ENCODE measurements at regions of chr6 and their contacts with region 1.

Region 1: GRCh38 chr6:1381481-1382330 is 7.7 kb upstream of the FOXF2 start:
- DNase-seq: peak in 1 of 2 experiments; percentile 88
- H3K4me3 ChIP-seq: peak overlapping the region; percentile 32
- H3K4me3 Mint-ChIP-seq: peak overlapping the region; percentile 21
- H3K27ac Mint-ChIP-seq: no peak overlapping the region
- H3K4me1 ChIP-seq: peaks cover 17% of the 10 kb centered on the region
- H3K4me1 Mint-ChIP-seq: no peaks in the 10 kb centered on the region
- H3K27me3 ChIP-seq: peaks cover 5% of the 10 kb centered on the region
- H3K27me3 Mint-ChIP-seq: peaks cover 28% of the 10 kb centered on the region
- CTCF ChIP-seq: peak; percentile 72 to 90

Region 2: DNA sequence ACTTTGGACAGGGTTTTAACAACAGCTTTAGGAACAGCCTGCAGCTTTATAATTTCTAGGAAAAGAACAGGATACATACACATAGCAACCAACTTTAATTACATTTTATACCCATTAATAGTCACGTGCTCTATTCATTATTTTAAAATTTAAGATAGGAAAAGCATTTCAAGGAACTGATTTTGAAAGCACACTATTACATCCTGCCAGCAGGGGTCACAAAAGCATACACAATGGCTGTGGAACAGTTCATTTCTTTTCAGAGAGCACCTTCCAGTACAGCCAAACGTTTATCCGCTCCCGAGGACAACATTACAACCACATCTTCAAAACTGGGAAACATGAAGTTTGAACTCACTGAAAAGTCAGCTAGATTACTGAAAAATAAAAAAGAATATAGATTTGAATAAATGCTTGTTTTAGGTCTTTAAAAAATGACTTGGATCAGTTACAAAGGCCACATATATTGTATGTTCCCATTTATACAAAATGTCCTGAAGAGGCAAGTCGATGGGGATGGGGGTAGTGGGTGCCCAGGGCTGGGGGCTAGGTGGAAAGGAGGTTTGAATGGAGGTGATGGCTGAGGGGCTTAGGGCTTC is 584.1 kb before region 1 on chr6:
- CTCF ChIA-PET with region 1: interaction called, 3 read pairs
- POLR2A ChIA-PET with region 1: no interaction called
- intact Hi-C with region 1: loop called (anchors 1 kb)
- DNase-seq: peak in 1 of 2 experiments; percentile 60
- H3K4me3 ChIP-seq: no peak overlapping the region
- H3K4me3 Mint-ChIP-seq: no peak overlapping the region
- H3K27ac Mint-ChIP-seq: no peak overlapping the region
- H3K4me1 ChIP-seq: no peaks in the 10 kb centered on the region
- H3K4me1 Mint-ChIP-seq: no peaks in the 10 kb centered on the region
- H3K27me3 ChIP-seq: no peaks in the 10 kb centered on the region
- H3K27me3 Mint-ChIP-seq: no peaks in the 10 kb centered on the region
- CTCF ChIP-seq: peak; percentile 73 to 74

Region 3: DNA sequence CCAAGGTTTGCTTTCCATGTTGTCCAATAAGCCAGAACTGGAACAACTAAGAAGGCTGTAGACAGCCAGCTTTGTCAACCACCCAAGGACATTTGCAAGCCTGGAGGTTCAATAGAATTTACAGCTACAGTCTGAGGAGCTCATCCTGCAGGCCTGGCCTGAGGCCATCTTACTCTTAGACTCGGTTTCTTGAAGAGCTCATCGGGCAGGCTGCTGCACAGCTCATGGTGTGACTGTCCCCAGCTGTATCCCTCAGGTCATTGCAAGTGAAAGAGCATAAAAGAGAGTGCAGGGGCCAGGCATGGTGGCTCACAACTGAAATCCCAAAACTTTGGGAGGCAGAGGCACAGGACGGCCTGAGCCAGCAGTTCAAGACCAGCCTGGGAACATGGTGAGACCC is 166.7 kb before region 1 on chr6:
- CTCF ChIA-PET with region 1: no interaction called
- POLR2A ChIA-PET with region 1: no interaction called
- intact Hi-C with region 1: loop called (anchors 5 kb)
- DNase-seq: no peak
- H3K4me3 ChIP-seq: no peak overlapping the region
- H3K4me3 Mint-ChIP-seq: no peak overlapping the region
- H3K27ac Mint-ChIP-seq: no peak overlapping the region
- H3K4me1 ChIP-seq: peaks cover 10% of the 10 kb centered on the region; the same call in 1 of the 2 replicates
- H3K4me1 Mint-ChIP-seq: peaks cover 15% of the 10 kb centered on the region
- H3K27me3 ChIP-seq: no peaks in the 10 kb centered on the region
- H3K27me3 Mint-ChIP-seq: no peaks in the 10 kb centered on the region
- CTCF ChIP-seq: no peak